ENCODE measurements at regions of chr3 and their contacts with region 1.

Region 1: GRCh38 chr3:121075191-121075590 is 167.2 kb downstream of the STXBP5L start:
- DNase-seq: no peak
- H3K4me3 ChIP-seq: no peak overlapping the region
- H3K27ac ChIP-seq: no peak overlapping the region
- H3K4me1 ChIP-seq: no peaks in the 10 kb centered on the region
- H3K27me3 ChIP-seq: no peaks in the 10 kb centered on the region
- CTCF ChIP-seq: no peak
- POLR2A ChIP-seq: no peak

Region 2: GRCh38 chr3:120550546-120550945 is 524.6 kb before region 1 on chr3:
- CTCF ChIA-PET with region 1: no interaction called
- POLR2A ChIA-PET with region 1: no interaction called
- dilution Hi-C with region 1: no loop called
- intact Hi-C with region 1: no loop called
- DNase-seq: no peak
- H3K4me3 ChIP-seq: no peak overlapping the region
- H3K27ac ChIP-seq: no peak overlapping the region
- H3K4me1 ChIP-seq: no peaks in the 10 kb centered on the region
- H3K27me3 ChIP-seq: no peaks in the 10 kb centered on the region
- CTCF ChIP-seq: no peak
- POLR2A ChIP-seq: no peak

Region 3: DNA sequence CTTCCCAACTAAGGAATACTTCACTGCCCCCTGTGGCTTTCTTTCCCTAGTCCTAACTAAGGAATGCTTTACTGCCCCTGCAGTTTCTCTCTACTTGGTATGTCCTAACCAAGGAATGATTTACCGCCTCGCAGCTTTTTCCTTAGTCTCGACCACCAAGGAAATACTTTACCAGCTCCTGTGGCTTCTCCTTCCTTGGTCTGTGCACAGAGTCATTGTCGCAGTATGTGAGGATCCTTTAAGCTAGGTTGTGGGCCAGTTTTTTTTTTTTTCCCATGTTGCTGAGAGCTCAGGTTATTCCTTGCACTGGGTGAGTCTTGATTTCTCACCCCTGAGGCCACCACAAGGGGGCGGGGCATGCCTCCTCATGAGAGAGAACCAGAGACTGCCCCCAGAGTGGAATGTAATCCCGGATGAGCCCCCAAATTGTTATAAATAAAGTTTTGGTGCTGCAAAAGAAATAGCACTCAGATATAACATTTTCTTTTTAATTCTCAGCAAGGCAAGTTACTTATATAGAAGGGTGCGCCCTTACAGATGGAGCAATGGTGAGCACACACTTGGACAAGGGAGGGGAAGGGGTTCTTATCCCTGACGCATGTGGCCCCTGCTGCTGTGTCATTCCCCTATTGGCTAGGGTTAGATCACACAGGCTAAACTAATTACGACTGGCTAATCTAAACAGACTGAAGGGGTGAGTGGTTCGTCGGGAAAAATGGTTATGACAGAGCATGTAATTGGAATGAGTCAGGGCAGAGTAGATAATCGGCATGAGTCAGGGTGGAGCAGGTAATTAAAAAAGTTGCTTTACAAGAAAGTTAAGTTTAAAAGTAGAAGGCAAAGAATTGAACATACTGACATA is 452.1 kb before region 1 on chr3:
- CTCF ChIA-PET with region 1: no interaction called
- POLR2A ChIA-PET with region 1: no interaction called
- dilution Hi-C with region 1: no loop called
- intact Hi-C with region 1: loop called (anchors 10 kb)
- DNase-seq: peak; percentile 51
- H3K4me3 ChIP-seq: no peak overlapping the region
- H3K27ac ChIP-seq: no peak overlapping the region
- H3K4me1 ChIP-seq: peaks cover 8% of the 10 kb centered on the region
- H3K27me3 ChIP-seq: no peaks in the 10 kb centered on the region
- CTCF ChIP-seq: peak; percentile 22 to 28
- POLR2A ChIP-seq: no peak